Activated B cell treated with CpG ODN at 0.5 μM for 24 hours (primary cell): ENCODE measurements at regions of chr15 and their contacts with region 1.

Region 1: DNA sequence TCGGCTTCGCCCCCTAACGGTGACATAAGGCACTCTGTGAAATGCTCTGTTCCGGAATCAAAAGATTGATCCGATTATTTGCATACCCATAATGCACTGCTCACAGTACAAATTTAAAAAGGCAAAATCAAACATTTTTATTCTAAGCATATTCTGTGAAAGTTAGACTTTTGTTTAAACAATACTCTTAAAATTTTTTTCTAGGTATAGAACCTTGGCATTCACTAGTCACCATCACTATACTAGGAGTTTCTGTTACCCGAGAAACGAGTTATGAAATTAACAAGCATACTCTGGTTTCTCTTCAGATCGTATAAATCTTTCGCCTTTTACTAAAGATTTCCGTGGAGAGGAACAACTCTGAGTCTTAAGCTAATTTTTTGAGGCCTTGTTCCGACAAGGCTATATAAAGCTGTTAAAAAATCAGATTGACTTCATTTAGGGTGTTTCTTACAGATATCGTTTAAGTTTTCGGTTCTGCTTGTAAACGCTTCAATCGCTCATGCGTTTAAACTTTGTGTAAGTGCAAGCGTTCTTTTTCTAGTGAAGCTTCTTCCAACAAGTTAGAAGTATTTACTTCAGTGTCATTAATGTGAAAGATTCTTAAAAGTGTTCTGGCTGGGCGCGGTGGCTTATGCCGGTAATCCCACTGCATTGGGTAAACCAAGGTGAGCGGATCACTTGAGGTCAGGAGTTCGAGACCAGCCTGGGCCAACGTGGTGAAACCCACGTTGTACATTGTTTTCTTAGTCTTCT is at the start of gene RNU5B-1:
- DNase-seq: peak; percentile 71
- ATAC-seq: peak; percentile 78
- H3K4me3 Mint-ChIP-seq: peak within 1 kb of the TSS; percentile 96
- H3K27ac Mint-ChIP-seq: peak within 1 kb of the TSS; percentile 97
- H3K4me1 Mint-ChIP-seq: peaks cover 37% of the 10 kb centered on the region
- H3K27me3 Mint-ChIP-seq: no peaks in the 10 kb centered on the region
- CTCF ChIP-seq: no peak
- total RNA-seq, gene RNU5B-1: 32.5 TPM in 1 of 2 replicates, not detected in the other

Region 2: DNA sequence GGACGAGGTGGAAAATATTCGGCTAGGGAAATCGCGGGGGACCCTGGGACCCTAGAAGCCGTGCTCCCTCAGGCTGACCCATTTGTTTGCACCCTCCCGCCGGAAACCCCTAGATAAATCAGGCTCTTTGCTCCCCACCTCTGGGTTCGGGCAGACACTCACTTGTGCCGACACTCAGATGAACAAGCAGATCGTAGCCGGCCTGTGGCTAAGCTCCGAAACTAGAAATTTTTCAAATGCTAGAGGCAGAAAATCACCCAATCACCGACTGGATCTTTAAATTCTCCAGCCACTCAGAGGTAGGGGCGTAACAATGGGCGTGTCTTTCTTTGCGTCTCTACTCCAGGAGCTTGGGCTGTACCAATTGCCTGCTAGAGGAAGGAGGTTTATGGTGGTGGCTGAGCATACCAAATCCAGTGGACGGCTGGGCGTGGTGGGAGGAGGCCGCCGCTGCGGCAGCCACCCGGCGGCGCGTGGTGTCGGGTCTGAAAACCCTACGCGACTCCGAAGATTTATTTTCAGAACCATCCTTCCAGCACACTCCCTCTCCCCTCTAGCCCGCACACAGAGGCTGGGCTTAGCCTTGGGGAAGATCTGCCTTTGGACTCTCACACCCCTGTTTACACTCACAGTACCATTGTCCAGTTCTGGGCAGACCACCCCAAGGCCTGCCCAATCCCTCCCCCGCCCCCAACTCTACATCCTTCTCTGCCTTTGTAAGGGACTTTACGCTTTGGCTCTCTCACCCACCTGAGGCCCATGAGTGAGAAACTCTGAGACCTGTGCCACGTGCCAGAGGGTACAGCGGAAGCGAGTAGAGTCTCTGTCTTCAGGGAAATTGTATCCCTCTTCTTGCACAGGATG is 478.9 kb before region 1 on chr15 and contains the start of gene PIF1:
- CTCF ChIA-PET with region 1: no interaction called
- POLR2A ChIA-PET with region 1: no interaction called
- intact Hi-C with region 1: loop called (anchors 1 kb)
- DNase-seq: peak; percentile 60
- ATAC-seq: peak; percentile 94
- H3K4me3 Mint-ChIP-seq: peak within 1 kb of the TSS; percentile 84
- H3K27ac Mint-ChIP-seq: peak within 1 kb of the TSS; percentile 87
- H3K4me1 Mint-ChIP-seq: peaks cover 31% of the 10 kb centered on the region
- H3K27me3 Mint-ChIP-seq: no peaks in the 10 kb centered on the region
- CTCF ChIP-seq: no peak
- total RNA-seq, gene PIF1: 3.3 and 5.5 TPM in 2 replicates

Region 3: GRCh38 chr15:65049418-65049840 is 255.1 kb before region 1 on chr15:
- CTCF ChIA-PET with region 1: no interaction called
- POLR2A ChIA-PET with region 1: interaction called, 5 read pairs
- intact Hi-C with region 1: loop called (anchors 2 kb)
- DNase-seq: peak; percentile 83
- ATAC-seq: peak; percentile 97
- H3K4me3 Mint-ChIP-seq: peak overlapping the region; percentile 77
- H3K27ac Mint-ChIP-seq: peak overlapping the region; percentile 63
- H3K4me1 Mint-ChIP-seq: peaks cover 19% of the 10 kb centered on the region
- H3K27me3 Mint-ChIP-seq: peaks cover 3% of the 10 kb centered on the region
- CTCF ChIP-seq: no peak

Region 4: DNA sequence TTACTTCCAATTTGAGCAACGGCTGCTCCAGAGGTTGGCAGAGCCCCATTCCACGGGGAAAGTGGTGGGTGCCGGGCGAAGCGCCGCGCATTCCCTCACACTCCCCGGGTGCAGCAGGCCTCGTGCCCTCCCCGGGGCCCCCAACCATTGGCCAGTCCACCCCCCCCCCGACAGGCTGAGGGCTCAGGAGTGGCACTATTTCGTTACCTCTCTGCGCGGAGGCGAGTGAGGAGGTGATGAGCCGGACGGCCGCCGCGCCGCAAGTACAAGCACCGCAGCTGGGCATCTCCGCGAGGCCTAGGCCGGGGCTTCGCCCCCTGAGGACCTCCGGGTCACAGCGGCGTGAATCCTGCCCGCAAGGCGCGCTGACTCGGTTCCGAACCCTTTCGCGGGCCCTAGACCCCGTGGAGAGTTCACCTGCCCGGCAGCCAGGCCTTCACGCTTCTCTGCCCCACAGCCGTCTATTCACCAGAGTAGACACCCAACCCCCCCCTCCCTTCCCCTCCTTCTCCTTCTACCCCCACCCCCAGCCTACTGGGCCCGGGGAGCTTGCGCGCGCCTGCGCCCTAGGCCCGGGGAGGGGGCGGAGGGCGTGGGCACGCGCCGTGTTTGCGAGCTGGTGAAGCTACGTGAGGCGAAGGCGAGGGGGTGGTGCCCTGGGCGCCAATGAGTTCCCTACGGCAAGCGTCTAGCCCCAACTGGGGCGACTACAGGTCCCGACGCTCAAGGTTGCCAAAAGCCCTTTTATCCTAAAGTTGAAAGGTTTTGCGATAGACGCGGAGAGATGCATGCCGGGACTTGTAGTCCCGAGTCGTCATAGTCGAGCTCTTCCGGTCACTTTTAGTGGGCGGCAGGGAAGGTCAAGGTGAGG is 119.5 kb before region 1 on chr15 and contains the start of gene CLPX:
- CTCF ChIA-PET with region 1: interaction called, 4 read pairs
- POLR2A ChIA-PET with region 1: interaction called, 94 read pairs
- intact Hi-C with region 1: loop called (anchors 1 kb)
- DNase-seq: peak; percentile 87
- ATAC-seq: peak; percentile 88
- H3K4me3 Mint-ChIP-seq: peak within 1 kb of the TSS; percentile 93
- H3K27ac Mint-ChIP-seq: peak within 1 kb of the TSS; percentile 89
- H3K4me1 Mint-ChIP-seq: peaks cover 26% of the 10 kb centered on the region
- H3K27me3 Mint-ChIP-seq: no peaks in the 10 kb centered on the region
- CTCF ChIP-seq: no peak
- total RNA-seq, gene CLPX: 52.2 and 53.5 TPM in 2 replicates

Region 5: GRCh38 chr15:65292938-65293518 is 11.5 kb before region 1 on chr15:
- CTCF ChIA-PET with region 1: interaction called, 3 read pairs
- POLR2A ChIA-PET with region 1: interaction called, 186 read pairs
- intact Hi-C with region 1: loop called (anchors 1 kb)
- DNase-seq: no peak
- ATAC-seq: no peak
- H3K4me3 Mint-ChIP-seq: no peak overlapping the region
- H3K27ac Mint-ChIP-seq: peak overlapping the region; percentile 4
- H3K4me1 Mint-ChIP-seq: peaks cover 35% of the 10 kb centered on the region
- H3K27me3 Mint-ChIP-seq: no peaks in the 10 kb centered on the region
- CTCF ChIP-seq: no peak

Region 6: GRCh38 chr15:65384895-65385858 is 80.6 kb after region 1 on chr15:
- CTCF ChIA-PET with region 1: interaction called, 5 read pairs
- POLR2A ChIA-PET with region 1: interaction called, 5 read pairs
- intact Hi-C with region 1: loop called (anchors 1 kb)
- DNase-seq: peak; percentile 68
- ATAC-seq: peak; percentile 84
- H3K4me3 Mint-ChIP-seq: peak overlapping the region; percentile 89
- H3K27ac Mint-ChIP-seq: no peak overlapping the region
- H3K4me1 Mint-ChIP-seq: peaks cover 10% of the 10 kb centered on the region
- H3K27me3 Mint-ChIP-seq: peaks cover 20% of the 10 kb centered on the region
- CTCF ChIP-seq: peak; percentile 12

Region 7: GRCh38 chr15:66504563-66505429 is 1200.2 kb after region 1 on chr15 and contains the starts of genes RPL4 and ZWILCH:
- CTCF ChIA-PET with region 1: no interaction called
- POLR2A ChIA-PET with region 1: interaction called, 8 read pairs
- intact Hi-C with region 1: loop called (anchors 10 kb)
- DNase-seq: peak; percentile 70
- ATAC-seq: peak; percentile 85
- H3K4me3 Mint-ChIP-seq: peak within 1 kb of the TSS; percentile 100
- H3K27ac Mint-ChIP-seq: peak within 1 kb of the TSS; percentile 100
- H3K4me1 Mint-ChIP-seq: peaks cover 42% of the 10 kb centered on the region
- H3K27me3 Mint-ChIP-seq: no peaks in the 10 kb centered on the region
- CTCF ChIP-seq: no peak
- total RNA-seq, gene RPL4: 3,690 and 4,303 TPM in 2 replicates
- total RNA-seq, gene ZWILCH: 8.4 and 13.7 TPM in 2 replicates